ENCODE measurements at regions of chr20 and their contacts with region 1.

Region 1: GRCh38 chr20:8399947-8400346 is 267.9 kb downstream of the PLCB1 start:
- DNase-seq: no peak

Region 2: DNA sequence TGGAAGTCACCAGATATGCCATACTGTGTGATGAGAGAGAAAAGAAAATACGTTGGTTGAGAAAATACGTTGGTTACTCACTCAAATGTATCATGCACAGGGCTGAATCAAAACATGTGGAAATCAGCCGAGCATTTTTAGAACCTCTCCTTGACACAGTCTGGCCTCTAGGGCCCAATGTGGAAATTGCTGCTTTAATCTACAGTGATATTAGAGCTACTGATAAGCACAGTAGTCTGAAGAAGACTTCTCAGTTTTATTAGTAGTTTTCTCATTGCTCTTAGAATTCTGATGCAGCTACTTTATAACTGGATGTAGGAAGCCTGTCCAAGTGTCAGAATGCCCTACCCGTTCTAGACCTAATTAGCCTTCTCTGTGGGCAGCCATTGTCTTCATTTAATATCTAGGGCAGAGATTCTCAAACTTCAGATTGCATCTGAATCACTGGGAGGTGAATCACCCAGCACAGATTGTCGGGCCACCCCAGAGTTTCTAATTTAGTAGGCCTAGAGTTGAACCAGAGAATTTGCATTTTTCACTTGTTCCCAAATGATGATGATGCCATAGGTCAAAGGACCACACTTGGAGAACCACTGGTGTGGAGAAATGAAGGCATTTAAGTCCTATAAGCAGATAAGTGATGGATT is 38.8 kb before region 1 on chr20:
- in situ Hi-C with region 1: no loop called
- DNase-seq: peak; percentile 74

Region 3: DNA sequence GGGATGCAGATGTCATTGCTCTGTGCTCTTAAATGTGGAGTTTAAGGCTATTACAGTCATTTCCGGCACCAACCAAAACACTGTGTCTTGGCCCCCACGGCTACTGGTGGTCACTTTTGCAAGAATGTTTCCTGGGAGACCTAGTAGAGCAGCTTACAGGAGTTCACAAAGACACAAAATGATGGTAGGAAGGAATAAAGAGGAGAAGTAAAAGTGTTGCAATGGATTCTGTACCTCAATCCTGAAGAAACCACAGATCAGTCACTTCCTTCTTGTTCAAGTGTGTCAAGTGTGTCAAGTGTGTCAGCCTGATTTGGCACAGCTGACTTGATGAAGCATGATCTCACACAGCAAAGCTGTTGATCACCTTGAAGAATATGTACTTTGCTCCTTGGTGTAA is 76.1 kb after region 1 on chr20:
- in situ Hi-C with region 1: loop called (anchors 5 kb)
- DNase-seq: no peak